ENCODE measurements at regions of chr21 and their contacts with region 1.

Region 1: DNA sequence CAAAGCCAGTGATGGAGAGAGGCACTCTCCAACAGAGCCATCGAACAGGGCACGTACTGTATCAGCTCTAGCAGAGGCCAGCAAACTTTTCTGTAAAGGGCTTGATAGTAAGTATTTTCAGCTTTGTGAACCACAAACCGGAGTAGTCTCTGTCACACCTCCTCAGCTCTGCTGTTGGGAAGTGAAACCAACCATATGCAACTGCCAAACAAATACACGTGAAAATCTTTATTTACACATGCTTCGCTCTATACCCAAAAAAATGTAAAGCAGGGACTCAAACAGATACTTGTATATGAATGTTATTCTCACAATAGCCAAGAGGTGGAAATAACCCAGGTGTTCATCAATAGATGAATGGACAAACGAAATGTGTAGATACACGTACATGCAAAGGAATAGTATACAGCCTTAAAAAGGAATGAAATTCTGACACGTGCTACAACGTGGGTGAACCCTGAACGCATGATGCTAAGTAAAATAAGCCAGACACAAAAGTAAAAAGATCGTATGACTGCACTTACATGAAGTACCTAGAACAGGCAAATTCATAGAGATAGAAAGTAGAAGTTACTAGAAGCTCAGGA is 39.0 kb downstream of the SETD4 start:
- DNase-seq: no peak
- H3K4me3 ChIP-seq: no peak overlapping the region
- H3K27ac ChIP-seq: no peak overlapping the region
- H3K4me1 ChIP-seq: peaks cover 0 to 27% (median 19%) of the 10 kb centered on the region in 4 donors
- H3K27me3 ChIP-seq: peaks cover 0 to 7% (median 0%) of the 10 kb centered on the region in 3 donors
- CTCF ChIP-seq: no peak
- EP300 ChIP-seq: no peak
- POLR2A ChIP-seq: no peak

Region 2: DNA sequence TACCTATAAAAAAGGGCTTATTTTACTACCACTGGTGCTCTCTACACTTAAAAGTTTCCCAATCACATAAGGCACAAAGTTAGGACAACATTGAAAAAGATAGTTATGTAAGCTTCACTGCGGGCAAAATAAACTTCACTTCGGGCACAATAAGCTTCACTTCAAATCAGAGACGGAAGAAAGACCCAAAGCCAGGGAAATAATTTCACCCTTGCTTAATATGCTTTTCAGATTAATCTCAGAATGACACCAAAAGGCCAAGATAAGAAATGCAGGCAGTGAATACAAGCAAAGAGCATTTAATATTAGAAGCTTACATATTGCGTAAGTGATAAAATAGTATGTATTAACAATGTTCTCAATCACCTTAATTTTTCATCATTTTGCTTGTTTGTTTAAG is 405.3 kb before region 1 on chr21:
- intact Hi-C with region 1: no loop called
- DNase-seq: no peak
- H3K4me3 ChIP-seq: no peak overlapping the region
- H3K27ac ChIP-seq: no peak overlapping the region
- H3K4me1 ChIP-seq: no peaks in the 10 kb centered on the region
- H3K27me3 ChIP-seq: no peaks in the 10 kb centered on the region
- CTCF ChIP-seq: peak in 2 of 4 experiments; percentile 24 to 36
- EP300 ChIP-seq: no peak
- POLR2A ChIP-seq: no peak

Region 3: DNA sequence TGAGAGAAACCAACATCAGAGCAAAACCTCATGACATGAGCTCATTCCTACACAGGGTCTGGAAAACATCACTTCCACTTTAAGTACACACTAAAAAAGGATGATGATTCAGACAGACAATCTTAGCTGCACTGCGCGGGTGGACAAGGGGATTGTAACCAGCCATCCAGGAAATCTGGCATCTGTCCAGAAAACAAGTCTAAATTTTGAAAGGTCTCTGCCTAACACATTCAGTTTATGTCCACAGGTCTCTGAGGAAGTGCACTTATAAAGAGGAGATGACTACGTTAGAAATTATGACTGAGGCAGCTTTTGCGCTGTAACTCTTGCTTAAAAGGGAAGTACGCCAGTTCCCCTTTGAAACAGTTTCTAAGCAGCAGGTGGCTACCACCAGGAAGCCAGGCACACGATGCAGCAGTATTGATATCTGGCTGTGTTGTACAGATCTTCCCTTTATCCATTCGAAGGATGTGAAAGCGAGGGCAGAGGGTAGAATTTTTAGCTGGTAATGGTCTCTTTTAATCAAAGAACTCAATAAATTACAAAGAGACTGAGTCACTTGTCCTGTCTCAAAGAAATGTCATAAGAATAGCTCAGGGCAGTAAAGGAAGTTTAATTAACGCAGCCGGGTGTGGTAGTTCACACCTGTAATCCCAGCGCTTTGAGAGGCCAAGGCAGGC is 89.0 kb before region 1 on chr21:
- intact Hi-C with region 1: loop called (anchors 5 kb)
- DNase-seq: peak; percentile 88
- H3K4me3 ChIP-seq: no peak overlapping the region
- H3K27ac ChIP-seq: peak overlapping the region; percentile 33 to 66 (median 63)
- H3K4me1 ChIP-seq: peaks cover 0 to 27% (median 23%) of the 10 kb centered on the region in 4 donors
- H3K27me3 ChIP-seq: no peaks in the 10 kb centered on the region
- CTCF ChIP-seq: peak in 1 of 4 experiments; percentile 13
- EP300 ChIP-seq: peak in 3 of 4 donors; percentile 5 to 66 (median 53)
- POLR2A ChIP-seq: no peak

Region 4: DNA sequence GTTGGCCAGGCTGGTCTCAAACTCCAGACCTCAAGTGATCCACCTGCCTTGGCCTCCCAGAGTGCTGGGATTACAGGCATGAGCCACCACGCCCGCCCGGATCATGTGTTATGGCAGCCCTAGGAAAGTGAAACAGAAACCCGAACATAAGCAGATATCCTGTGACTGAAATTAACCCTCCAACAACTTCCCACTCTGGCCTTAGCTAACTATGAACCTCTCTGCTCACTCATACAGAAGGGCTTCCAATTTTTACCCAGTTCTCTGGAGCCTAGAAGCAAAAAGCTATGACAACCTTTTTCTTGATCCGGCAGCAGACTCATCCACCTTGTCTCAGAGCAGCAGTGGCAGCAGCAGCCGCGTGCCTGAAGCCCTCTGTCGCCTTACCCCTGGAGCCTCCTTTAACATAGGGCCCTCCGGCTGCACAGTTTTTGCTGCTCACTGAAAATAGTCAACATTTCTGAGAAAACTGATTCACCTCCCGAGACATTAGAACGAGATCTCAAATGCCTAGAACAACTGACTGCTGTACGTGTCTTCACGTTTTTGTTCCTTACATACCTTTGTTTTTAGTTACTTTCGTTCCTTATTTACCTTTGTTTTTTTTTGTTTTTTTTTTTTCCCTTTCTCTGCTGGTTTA is 57.8 kb after region 1 on chr21:
- intact Hi-C with region 1: no loop called
- DNase-seq: no peak
- H3K4me3 ChIP-seq: no peak overlapping the region
- H3K27ac ChIP-seq: no peak overlapping the region
- H3K4me1 ChIP-seq: no peaks in the 10 kb centered on the region
- H3K27me3 ChIP-seq: no peaks in the 10 kb centered on the region
- CTCF ChIP-seq: no peak
- EP300 ChIP-seq: no peak
- POLR2A ChIP-seq: no peak

Region 5: DNA sequence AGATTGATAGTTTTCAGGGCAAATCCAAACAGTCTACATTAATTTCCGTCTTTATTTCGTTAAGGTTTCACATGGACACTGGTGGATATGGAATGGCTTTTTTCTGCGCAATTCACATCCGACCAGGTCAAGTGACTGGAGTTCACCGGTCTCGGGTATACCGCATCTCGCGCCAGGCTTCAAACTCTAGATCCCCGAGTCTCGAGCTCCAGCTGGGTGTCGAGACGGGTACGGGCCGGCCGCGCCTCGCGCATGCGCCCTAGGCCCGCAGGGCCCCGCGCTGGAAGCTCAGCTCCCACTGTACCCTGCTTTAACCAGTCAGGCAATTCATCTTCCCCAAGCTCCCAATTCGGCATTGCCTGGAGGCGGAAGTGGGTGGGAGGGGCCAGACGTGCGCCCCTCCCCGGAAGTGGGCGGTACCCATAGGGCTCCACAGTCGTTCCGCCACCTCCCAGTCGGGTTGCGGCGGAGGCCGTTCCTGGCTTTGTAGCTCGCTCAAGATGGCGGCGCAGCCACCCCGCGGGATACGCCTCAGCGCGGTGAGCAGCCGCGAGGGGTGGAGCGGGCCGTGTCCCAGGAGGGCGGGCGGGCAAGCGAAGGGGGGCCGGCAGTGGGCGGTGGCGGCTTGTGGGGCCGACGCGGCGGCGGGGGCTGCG is 298.5 kb after region 1 on chr21 and contains the start of gene MORC3:
- intact Hi-C with region 1: no loop called
- DNase-seq: peak; percentile 98
- H3K4me3 ChIP-seq: peak within 1 kb of the TSS; percentile 77 to 94 (median 78)
- H3K27ac ChIP-seq: peak within 1 kb of the TSS; percentile 96 to 99 (median 98)
- H3K4me1 ChIP-seq: peaks cover 0 to 40% (median 35%) of the 10 kb centered on the region in 4 donors
- H3K27me3 ChIP-seq: no peaks in the 10 kb centered on the region
- CTCF ChIP-seq: no peak
- EP300 ChIP-seq: peak in 1 of 4 donors; percentile 29
- POLR2A ChIP-seq: peak; percentile 74 to 86
- total RNA-seq, gene MORC3: 39.5 to 59.8 (median 48.4) TPM